Left ventricle myocardium inferior (tissue), 1 donor: ENCODE measurements at regions of chr1 and their contacts with region 1.

Region 1: GRCh38 chr1:114558544-114558943 is 22.9 kb downstream of the BCAS2 start:
- DNase-seq: no peak
- H3K4me3 ChIP-seq: no peak overlapping the region
- H3K27ac ChIP-seq: no peak overlapping the region
- H3K4me1 ChIP-seq: no peaks in the 10 kb centered on the region
- H3K27me3 ChIP-seq: no peaks in the 10 kb centered on the region
- CTCF ChIP-seq: peak; percentile 50

Region 2: GRCh38 chr1:114346480-114347029 is 212.0 kb before region 1 on chr1:
- intact Hi-C with region 1: loop called (anchors 10 kb)
- DNase-seq: peak; percentile 94
- H3K4me3 ChIP-seq: peak overlapping the region; percentile 73
- H3K27ac ChIP-seq: peak overlapping the region; percentile 82
- H3K4me1 ChIP-seq: peaks cover 16% of the 10 kb centered on the region
- H3K27me3 ChIP-seq: no peaks in the 10 kb centered on the region
- CTCF ChIP-seq: peak; percentile 100

Region 3: DNA sequence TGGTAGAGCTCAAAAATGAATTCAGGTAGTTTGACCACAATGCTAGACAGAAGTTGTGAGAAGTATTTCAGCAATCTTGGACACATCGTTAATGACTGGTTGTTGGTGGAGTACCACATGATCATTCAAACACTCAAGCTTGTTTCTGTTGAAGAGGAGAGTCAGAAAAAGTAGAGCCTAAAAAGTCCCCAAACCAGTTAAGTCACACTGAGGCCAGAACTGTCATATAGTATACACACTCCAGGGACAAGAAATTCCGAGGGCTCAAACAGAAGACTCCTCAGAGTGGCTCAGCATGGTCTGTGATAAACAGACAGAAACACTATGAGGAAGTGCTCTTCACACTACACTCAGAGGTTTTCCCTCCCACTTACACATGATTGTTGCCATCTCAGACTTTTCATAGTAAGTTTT is 53.4 kb before region 1 on chr1:
- intact Hi-C with region 1: no loop called
- DNase-seq: no peak
- H3K4me3 ChIP-seq: no peak overlapping the region
- H3K27ac ChIP-seq: no peak overlapping the region
- H3K4me1 ChIP-seq: peaks cover 64% of the 10 kb centered on the region
- H3K27me3 ChIP-seq: no peaks in the 10 kb centered on the region
- CTCF ChIP-seq: no peak

Region 4: DNA sequence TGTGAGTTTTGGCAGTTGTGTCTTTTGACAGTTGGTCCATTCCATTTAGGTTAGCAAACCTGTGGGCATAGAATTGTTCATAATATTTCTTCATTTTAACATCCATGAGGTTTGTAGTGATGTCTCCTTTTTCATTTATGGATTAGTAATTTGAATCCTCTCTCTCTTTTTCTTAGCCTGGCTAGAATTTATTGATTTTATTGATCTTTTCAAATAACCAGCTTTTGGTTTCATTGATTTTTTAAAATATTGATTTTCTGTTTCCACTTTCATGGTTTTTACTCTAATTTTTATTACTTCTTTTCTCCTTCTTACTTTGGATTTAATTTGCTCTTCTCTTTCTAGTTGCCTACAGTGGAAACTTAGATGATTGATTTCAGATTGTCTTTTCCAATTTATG is 310.2 kb after region 1 on chr1:
- intact Hi-C with region 1: no loop called
- DNase-seq: no peak
- H3K4me3 ChIP-seq: no peak overlapping the region
- H3K27ac ChIP-seq: no peak overlapping the region
- H3K4me1 ChIP-seq: no peaks in the 10 kb centered on the region
- H3K27me3 ChIP-seq: peaks cover 5% of the 10 kb centered on the region
- CTCF ChIP-seq: no peak